Ovary (tissue), 10 donors: ENCODE measurements at regions of chr19 and their contacts with region 1.

Region 1: DNA sequence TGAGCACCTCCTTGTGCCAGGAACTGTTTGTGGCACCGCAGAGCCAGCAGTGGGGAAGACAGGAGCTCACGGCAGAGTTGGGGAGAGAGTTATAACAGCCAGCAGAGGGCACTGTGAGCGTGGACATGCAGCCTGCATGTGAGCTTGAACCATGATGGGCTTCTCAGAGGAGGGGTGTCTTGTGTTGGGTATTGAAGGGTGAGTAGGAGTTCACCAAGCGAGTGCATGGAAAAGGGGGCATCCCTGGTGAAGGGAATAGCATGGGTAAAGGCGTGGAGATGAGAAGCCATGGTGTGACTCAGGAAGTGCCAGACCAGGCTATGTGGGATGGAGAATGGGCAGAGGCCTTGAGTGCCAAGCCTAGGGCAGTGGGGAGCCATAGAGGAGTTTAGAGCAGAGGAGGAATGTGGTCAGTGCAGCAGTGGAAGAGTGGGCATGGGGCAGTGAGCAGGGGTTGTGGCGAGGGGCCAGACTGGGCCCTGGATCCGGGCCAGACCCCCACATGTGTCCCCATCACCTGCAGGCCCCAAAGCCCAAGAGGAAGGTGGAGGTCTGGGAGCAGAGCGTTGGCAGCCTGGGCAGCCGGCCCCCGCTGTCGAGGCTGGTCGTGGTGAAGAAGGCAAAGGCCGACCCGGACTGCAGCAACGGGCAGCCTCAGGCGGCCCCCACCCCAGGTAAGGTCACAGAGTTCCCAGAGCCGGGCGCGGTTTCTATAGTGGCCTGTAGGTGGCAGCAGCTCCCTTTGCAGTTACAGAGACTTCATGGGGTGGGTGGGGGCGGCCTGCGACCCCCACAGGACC is 11.8 kb upstream of the SHD start:
- DNase-seq: peak; percentile 34 to 72 (median 65)
- H3K4me3 ChIP-seq: no peak overlapping the region
- H3K27ac ChIP-seq: no peak overlapping the region
- H3K4me1 ChIP-seq: peaks cover 1% of the 10 kb centered on the region
- H3K27me3 ChIP-seq: no peaks in the 10 kb centered on the region
- CTCF ChIP-seq: peak; percentile 59 to 65 (median 62)
- EP300 ChIP-seq: no peak
- POLR2A ChIP-seq: no peak

Region 2: DNA sequence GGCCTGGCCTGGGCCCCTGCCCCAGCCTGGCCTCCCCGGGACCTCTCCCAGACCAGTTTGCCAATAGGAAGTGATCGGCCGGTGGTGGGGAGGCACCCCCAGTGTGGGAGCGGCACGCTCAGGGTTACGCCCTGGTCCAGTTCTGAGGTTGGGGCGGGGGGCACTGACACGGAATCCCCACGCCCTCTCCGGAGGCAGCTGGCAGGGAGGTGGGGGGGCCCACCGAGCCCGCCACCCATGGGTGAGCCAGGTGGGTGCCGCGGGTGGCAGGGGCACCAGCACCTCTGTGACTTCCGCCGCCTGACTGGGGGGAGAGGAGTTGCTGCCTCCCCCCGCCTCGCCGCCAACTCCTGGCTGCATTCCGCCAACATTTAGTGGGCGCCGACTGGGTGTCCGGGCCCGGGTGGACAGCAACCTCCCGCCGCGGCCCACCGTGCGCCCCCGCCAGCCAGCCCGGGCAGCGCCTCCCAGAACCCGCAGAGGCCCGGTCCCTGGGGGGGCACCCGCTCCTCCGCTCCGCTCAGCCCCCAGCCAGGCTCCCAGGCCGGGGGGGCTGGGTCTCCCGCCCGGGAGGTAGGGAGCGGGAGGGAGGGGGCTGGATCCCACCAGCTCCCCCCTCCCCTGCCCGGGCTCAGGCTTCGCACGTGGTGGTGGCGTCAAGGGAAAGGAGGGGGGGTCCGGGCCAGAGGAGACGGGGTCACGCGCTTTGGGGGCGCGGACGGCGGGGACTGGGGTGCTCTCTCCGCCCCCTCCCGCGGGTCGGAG is 202.6 kb before region 1 on chr19:
- intact Hi-C with region 1: no loop called
- DNase-seq: peak; percentile 75 to 83 (median 80)
- H3K4me3 ChIP-seq: peak overlapping the region; percentile 67
- H3K27ac ChIP-seq: peak overlapping the region; percentile 92
- H3K4me1 ChIP-seq: peaks cover 38% of the 10 kb centered on the region
- H3K27me3 ChIP-seq: no peaks in the 10 kb centered on the region
- CTCF ChIP-seq: no peak
- EP300 ChIP-seq: no peak
- POLR2A ChIP-seq: peak; percentile 13

Region 3: GRCh38 chr19:4342615-4343369 is 75.5 kb after region 1 on chr19:
- intact Hi-C with region 1: loop called in 1 of 4 experiments (anchors 10 kb)
- DNase-seq: peak; percentile 93 to 97 (median 95)
- H3K4me3 ChIP-seq: peak overlapping the region; percentile 72
- H3K27ac ChIP-seq: peak overlapping the region; percentile 83 to 86
- H3K4me1 ChIP-seq: peaks cover 9% of the 10 kb centered on the region
- H3K27me3 ChIP-seq: no peaks in the 10 kb centered on the region
- CTCF ChIP-seq: no peak
- EP300 ChIP-seq: no peak
- POLR2A ChIP-seq: peak; percentile 96

Region 4: DNA sequence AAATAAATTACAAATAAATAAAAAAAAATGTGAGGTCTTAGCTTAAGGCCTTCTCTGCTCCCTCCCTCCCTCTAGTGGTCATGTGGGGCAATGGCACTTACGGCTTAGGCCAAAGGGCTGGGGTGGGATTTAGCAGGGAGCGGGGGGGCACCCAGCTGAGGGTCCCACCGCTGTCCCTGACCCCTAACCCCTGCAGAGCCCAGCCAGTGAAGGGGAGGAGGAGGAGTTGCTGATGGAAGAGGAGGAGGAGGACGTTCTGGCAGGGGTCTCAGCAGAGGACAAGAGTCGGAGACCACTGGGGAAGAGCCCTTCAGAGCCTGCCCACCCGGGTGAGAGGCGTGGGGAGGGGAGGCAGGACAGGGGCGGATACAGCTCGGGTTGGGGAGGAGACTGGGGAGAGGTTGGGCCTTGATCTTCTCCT is 85.4 kb after region 1 on chr19:
- intact Hi-C with region 1: loop called in 2 of 4 experiments (anchors 5 to 10 kb)
- DNase-seq: peak in 3 of 5 donors; percentile 63 to 69 (median 65)
- H3K4me3 ChIP-seq: no peak overlapping the region
- H3K27ac ChIP-seq: no peak overlapping the region
- H3K4me1 ChIP-seq: peaks cover 2% of the 10 kb centered on the region
- H3K27me3 ChIP-seq: no peaks in the 10 kb centered on the region
- CTCF ChIP-seq: peak; percentile 51 to 81 (median 71)
- EP300 ChIP-seq: no peak
- POLR2A ChIP-seq: no peak

Region 5: GRCh38 chr19:4390567-4391305 is 123.4 kb after region 1 on chr19:
- intact Hi-C with region 1: loop called in 2 of 4 experiments (anchors 5 to 10 kb)
- DNase-seq: peak in 1 of 5 donors; percentile 26
- H3K4me3 ChIP-seq: no peak overlapping the region
- H3K27ac ChIP-seq: peak overlapping the region; percentile 51 to 52
- H3K4me1 ChIP-seq: peaks cover 32% of the 10 kb centered on the region
- H3K27me3 ChIP-seq: no peaks in the 10 kb centered on the region
- CTCF ChIP-seq: no peak
- EP300 ChIP-seq: no peak
- POLR2A ChIP-seq: no peak

Region 6: GRCh38 chr19:4400135-4400936 is 133.0 kb after region 1 on chr19 and contains the start of gene SH3GL1:
- intact Hi-C with region 1: loop called in 1 of 4 experiments (anchors 10 kb)
- DNase-seq: peak; percentile 88 to 96 (median 93)
- H3K4me3 ChIP-seq: peak within 1 kb of the TSS; percentile 99
- H3K27ac ChIP-seq: peak within 1 kb of the TSS; percentile 68 to 88
- H3K4me1 ChIP-seq: peaks cover 14% of the 10 kb centered on the region
- H3K27me3 ChIP-seq: no peaks in the 10 kb centered on the region
- CTCF ChIP-seq: peak; percentile 98 to 100 (median 98)
- EP300 ChIP-seq: no peak
- POLR2A ChIP-seq: peak; percentile 69
- total RNA-seq, gene SH3GL1: 20.5 to 88.6 (median 68.3) TPM

Region 7: GRCh38 chr19:4449022-4449638 is 181.8 kb after region 1 on chr19:
- intact Hi-C with region 1: loop called in 2 of 4 experiments (anchors 10 kb)
- DNase-seq: peak in 4 of 5 donors; percentile 54 to 83 (median 64)
- H3K4me3 ChIP-seq: no peak overlapping the region
- H3K27ac ChIP-seq: no peak overlapping the region
- H3K4me1 ChIP-seq: no peaks in the 10 kb centered on the region
- H3K27me3 ChIP-seq: no peaks in the 10 kb centered on the region
- CTCF ChIP-seq: no peak
- EP300 ChIP-seq: no peak
- POLR2A ChIP-seq: no peak

Region 8: DNA sequence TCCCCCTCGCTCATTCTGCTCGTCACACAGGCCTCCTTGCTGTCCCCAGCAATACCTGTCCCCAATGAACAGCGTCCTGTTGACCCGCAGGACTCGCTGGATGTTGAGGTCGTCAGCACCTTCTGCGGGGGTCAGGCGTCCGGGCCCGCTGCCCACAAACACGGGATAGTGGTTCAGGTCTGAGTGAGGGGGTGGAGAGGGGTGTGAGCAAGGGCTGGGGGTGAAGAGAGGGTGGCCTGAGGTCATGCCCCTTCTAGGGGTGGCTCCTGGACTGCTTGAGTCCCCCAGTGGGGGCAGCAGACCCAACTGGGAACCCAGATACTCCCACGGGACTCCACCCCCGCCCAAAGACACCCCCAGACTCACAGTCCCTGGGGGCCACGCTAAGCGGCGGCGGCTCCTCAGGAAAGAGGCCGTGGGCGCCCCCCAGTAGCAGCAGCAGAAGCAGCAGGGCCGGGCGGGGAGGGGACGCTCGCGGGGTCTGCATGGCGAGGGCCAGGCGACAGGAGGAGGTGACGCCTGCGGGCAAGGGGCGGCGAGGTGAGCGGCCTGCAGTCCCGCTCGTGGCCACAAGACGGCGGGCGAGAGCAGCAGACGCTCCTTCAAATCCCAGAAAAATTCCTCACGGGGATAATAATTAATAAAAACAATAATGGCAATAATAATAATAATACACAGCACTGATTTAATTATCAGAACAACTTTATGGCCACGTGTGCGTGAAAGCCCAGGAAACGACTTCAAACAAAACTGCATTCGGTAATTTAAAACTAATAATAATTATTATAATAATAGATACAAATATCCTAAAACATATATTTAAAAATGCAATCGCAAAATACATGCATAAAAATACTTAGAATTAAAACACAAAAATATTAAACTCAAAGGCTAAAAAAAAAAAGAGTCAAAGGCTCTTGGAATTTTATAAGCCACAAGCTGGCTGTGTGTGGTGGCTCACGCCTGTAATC is 291.0 kb after region 1 on chr19:
- intact Hi-C with region 1: loop called in 1 of 4 experiments (anchors 10 kb)
- DNase-seq: peak in 2 of 5 donors; percentile 66 to 67
- H3K4me3 ChIP-seq: no peak overlapping the region
- H3K27ac ChIP-seq: no peak overlapping the region
- H3K4me1 ChIP-seq: no peaks in the 10 kb centered on the region
- H3K27me3 ChIP-seq: no peaks in the 10 kb centered on the region
- CTCF ChIP-seq: peak; percentile 85 to 97 (median 90)
- EP300 ChIP-seq: no peak
- POLR2A ChIP-seq: no peak